AG04449 (cell line): ENCODE measurements at regions of chr12 and their contacts with region 1.

Region 1: DNA sequence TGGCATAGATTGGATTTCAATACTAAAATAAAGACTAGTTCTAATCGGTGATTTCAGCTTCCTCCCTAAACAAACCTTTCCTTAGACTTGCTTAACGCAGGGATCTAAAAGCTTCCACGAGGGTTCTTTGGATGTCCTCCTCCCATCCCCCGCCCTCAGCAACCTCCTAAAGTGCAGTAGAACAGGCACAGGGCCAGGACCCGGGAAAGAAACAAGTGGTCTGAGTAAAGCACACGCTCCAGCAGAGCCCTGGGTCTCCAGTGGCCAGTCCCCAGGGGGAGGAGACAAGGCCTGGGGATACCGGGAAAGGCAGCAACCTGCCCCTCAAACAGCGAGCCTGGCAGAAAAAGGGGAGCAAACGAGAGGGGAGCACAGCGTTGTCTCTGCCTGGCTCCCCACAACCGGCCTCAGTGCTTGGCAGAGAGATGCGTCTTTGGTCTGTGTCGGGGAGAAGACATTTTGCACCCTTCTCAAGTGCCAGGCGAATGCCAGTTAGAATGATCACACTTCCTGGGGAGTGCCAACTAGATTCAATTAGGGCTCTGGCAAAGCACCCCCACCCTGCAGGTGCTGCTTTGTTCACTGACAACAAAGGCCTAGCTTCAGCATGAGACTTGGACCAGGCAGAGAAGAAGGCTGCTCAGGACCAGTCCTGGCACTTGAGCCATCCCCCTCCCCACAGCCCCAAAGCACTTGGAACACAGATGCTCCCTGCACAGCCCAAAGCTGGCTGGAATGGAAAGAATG is 17.1 kb upstream of the SLC6A12 start:
- DNase-seq: no peak
- H3K4me3 ChIP-seq: no peak overlapping the region
- CTCF ChIP-seq: no peak

Region 2: GRCh38 chr12:219891-220352 is 11.2 kb before region 1 on chr12:
- CTCF ChIA-PET with region 1: interaction called, 13 read pairs
- POLR2A ChIA-PET with region 1: no interaction called
- DNase-seq: no peak
- H3K4me3 ChIP-seq: no peak overlapping the region
- CTCF ChIP-seq: peak; percentile 71

Region 3: GRCh38 chr12:630656-631632 is 399.8 kb after region 1 on chr12:
- CTCF ChIA-PET with region 1: no interaction called
- POLR2A ChIA-PET with region 1: no interaction called
- DNase-seq: no peak
- H3K4me3 ChIP-seq: no peak overlapping the region
- CTCF ChIP-seq: no peak